Activated CD4-positive, alpha-beta memory T cell treated with anti-CD3 and anti-CD28 coated beads, Interleukin-2, amount 10 ng/mL, durations not matched to agents 7 days and 5 days (primary cell): ENCODE measurements at regions of chr12 and their contacts with region 1.

Region 1: DNA sequence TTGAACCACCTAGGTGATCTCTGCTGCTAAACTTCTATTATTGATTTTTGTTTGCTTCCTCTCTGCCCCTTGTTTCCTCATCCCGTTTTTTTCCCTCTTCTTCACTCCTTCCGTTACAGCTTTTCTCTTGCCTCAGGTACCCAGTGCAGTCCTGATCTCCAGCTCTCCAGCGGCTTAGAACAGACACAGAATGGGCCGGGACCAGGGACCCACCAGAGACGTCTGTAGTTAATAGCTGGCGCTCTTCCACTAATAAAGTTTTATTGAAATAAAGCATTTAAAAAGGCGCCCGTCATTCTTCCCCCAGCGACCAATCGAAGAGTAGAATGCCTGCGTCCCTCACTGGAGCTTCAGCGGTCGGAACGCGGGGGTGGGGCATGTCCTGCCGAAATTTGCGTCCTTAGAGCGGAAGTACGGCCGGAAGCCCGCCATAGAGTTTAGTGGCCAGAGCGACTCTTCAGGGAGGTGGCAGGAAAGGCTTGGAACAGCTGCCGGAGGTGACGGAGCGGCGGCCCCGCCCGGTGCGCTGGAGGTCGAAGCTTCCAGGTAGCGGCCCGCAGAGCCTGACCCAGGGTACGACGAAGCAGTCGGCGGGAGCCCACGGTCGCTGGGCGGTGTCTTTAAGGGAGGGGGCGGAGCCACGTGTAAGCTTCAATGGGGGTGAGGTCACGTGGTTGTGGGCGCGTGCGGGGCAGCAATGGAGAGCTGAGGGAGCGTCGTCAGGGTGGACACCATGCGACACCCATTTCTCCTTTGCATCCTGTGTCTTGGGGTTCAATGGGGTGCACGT is at the start of gene COPS7A:
- DNase-seq: peak; percentile 99
- H3K4me3 Mint-ChIP-seq: peak within 1 kb of the TSS; percentile 84
- H3K27ac Mint-ChIP-seq: peak within 1 kb of the TSS; percentile 92
- H3K4me1 Mint-ChIP-seq: peaks cover 22% of the 10 kb centered on the region
- H3K27me3 Mint-ChIP-seq: no peaks in the 10 kb centered on the region
- total RNA-seq, gene COPS7A: 28.4 to 29.0 TPM

Region 2: DNA sequence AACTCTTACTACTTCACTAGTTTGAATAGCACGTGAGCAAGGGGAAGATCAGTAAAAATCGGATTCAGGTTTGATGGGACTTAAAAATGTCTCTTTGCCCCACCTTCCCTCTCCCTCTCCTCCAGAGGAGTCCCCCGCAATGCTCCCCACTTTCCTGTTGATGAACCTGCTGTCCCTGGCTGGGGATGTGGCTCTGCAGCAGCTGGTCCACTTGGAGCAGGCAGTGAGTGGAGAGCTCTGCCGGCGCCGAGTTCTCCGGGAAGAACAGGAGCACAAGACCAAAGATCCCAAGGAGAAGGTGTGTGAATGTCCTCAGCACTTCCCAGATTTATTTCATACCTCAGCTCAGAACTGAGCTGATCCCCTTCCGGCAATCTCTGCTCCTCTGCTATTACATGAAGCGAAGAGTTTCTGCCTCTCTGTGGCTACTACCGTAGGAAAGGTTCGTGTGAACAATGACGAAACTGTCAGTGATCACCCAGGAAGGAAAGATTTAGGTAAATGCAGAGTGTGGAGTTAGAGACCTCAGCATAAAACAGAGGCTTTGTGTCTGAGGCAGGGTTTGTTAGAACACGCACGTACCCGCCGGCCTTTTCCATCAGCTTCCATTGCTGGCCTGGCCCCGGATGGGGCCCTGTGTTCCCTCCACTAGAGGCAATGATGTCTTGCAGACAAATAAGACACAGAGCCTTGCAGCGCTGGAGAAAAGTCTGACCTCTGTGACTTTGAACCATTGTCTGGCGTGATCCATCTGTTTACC is 196.9 kb before region 1 on chr12:
- CTCF ChIA-PET with region 1: no interaction called
- POLR2A ChIA-PET with region 1: no interaction called
- DNase-seq: no peak
- H3K4me3 Mint-ChIP-seq: no peak overlapping the region
- H3K27ac Mint-ChIP-seq: no peak overlapping the region
- H3K4me1 Mint-ChIP-seq: peaks cover 8% of the 10 kb centered on the region
- H3K27me3 Mint-ChIP-seq: no peaks in the 10 kb centered on the region

Region 3: DNA sequence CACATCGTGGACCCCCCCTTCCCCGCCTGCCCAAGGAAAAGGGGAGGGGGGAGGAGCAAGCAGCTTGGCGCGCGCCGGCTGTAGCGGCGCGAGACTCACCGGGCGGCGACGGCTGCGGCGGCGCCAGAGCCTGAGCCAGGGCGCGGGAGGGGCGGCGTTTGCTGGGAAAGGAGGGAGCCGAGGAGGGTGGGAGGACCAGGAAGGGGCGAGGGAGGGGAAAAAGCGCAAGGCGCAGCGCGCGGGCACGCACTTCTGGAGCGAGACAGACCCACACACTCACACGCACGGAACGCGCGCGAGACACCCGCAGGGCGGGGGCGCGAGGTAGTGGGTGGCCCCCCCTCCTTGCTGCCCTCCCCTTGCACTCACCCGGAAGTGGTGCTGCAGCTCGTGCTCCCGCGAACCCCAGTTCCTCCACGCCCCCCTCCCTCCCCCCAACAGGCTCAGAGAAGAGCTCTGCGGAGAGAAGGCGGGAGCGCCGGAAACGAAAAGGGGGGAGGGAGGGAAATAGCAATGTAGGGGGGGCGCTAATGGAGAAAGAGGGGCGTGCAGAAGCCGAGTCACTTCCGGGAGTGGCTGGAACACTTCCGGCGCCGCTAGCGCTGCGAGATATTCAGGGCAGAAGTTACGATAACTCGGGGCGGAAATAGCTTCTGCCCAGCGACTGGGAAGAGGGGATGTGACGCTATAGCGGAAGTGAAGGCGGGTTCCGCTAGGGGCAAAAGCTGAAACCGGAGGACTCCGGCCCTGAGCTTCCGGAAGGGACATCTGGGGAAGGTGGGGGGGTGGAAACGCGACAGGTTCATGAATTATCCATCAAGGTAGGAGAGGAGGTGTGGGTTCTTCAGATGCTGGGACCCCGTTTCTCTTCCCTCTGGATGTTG is 34.6 kb before region 1 on chr12 and contains the start of gene ZNF384:
- CTCF ChIA-PET with region 1: interaction called, 41 read pairs
- POLR2A ChIA-PET with region 1: interaction called, 103 read pairs
- DNase-seq: peak; percentile 97
- H3K4me3 Mint-ChIP-seq: peak within 1 kb of the TSS; percentile 87
- H3K27ac Mint-ChIP-seq: peak within 1 kb of the TSS; percentile 91
- H3K4me1 Mint-ChIP-seq: peaks cover 55% of the 10 kb centered on the region
- H3K27me3 Mint-ChIP-seq: no peaks in the 10 kb centered on the region
- total RNA-seq, gene ZNF384: 69.5 to 78.1 TPM

Region 4: GRCh38 chr12:6735448-6736191 is 11.8 kb after region 1 on chr12:
- CTCF ChIA-PET with region 1: interaction called, 3 read pairs
- POLR2A ChIA-PET with region 1: interaction called, 13 read pairs
- DNase-seq: peak; percentile 53
- H3K4me3 Mint-ChIP-seq: no peak overlapping the region
- H3K27ac Mint-ChIP-seq: no peak overlapping the region
- H3K4me1 Mint-ChIP-seq: peaks cover 6% of the 10 kb centered on the region
- H3K27me3 Mint-ChIP-seq: no peaks in the 10 kb centered on the region

Region 5: GRCh38 chr12:6764011-6764828 is 40.4 kb after region 1 on chr12:
- CTCF ChIA-PET with region 1: interaction called, 13 read pairs
- POLR2A ChIA-PET with region 1: interaction called, 4 read pairs
- DNase-seq: peak; percentile 71
- H3K4me3 Mint-ChIP-seq: peak overlapping the region; percentile 38
- H3K27ac Mint-ChIP-seq: no peak overlapping the region
- H3K4me1 Mint-ChIP-seq: peaks cover 42% of the 10 kb centered on the region
- H3K27me3 Mint-ChIP-seq: peaks cover 46% of the 10 kb centered on the region

Region 6: DNA sequence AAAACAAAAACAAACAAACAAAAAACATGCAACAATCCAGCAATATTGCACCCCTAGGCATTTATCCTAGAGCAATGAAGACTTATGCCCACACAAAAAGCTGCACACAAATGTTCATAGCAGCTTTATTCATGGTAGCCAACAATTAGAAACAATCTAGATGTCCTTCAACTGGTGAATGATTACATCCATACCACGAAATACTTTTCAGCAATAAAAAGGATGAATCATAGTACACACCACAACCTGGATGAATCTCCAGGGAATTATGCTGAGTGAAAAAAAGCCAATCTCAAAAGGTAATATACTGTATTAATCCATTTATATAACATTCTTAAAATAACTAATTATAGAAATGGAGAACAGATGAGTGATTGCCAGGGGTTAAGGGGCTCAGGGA is 83.4 kb after region 1 on chr12:
- CTCF ChIA-PET with region 1: no interaction called
- POLR2A ChIA-PET with region 1: no interaction called
- DNase-seq: no peak
- H3K4me3 Mint-ChIP-seq: no peak overlapping the region
- H3K27ac Mint-ChIP-seq: no peak overlapping the region
- H3K4me1 Mint-ChIP-seq: peaks cover 13% of the 10 kb centered on the region
- H3K27me3 Mint-ChIP-seq: no peaks in the 10 kb centered on the region

Region 7: GRCh38 chr12:6825398-6826124 is 101.8 kb after region 1 on chr12:
- CTCF ChIA-PET with region 1: interaction called, 3 read pairs
- POLR2A ChIA-PET with region 1: interaction called, 10 read pairs
- DNase-seq: peak; percentile 84
- H3K4me3 Mint-ChIP-seq: no peak overlapping the region
- H3K27ac Mint-ChIP-seq: no peak overlapping the region
- H3K4me1 Mint-ChIP-seq: peaks cover 27% of the 10 kb centered on the region
- H3K27me3 Mint-ChIP-seq: peaks cover 72% of the 10 kb centered on the region